Natural killer cell (primary cell): ENCODE measurements at regions of chr4 and their contacts with region 1.

Region 1: GRCh38 chr4:67087897-67088296 is 457.4 kb downstream of the CENPC start:
- DNase-seq: peak in 1 of 2 donors; percentile 47
- ATAC-seq: no peak
- H3K4me3 ChIP-seq: no peak overlapping the region
- H3K4me3 Mint-ChIP-seq: no peak overlapping the region
- H3K27ac ChIP-seq: no peak overlapping the region
- H3K27ac Mint-ChIP-seq: no peak overlapping the region
- H3K4me1 ChIP-seq: no peaks in the 10 kb centered on the region
- H3K4me1 Mint-ChIP-seq: no peaks in the 10 kb centered on the region
- H3K27me3 ChIP-seq: no peaks in the 10 kb centered on the region
- H3K27me3 Mint-ChIP-seq: no peaks in the 10 kb centered on the region
- CTCF ChIP-seq: no peak

Region 2: DNA sequence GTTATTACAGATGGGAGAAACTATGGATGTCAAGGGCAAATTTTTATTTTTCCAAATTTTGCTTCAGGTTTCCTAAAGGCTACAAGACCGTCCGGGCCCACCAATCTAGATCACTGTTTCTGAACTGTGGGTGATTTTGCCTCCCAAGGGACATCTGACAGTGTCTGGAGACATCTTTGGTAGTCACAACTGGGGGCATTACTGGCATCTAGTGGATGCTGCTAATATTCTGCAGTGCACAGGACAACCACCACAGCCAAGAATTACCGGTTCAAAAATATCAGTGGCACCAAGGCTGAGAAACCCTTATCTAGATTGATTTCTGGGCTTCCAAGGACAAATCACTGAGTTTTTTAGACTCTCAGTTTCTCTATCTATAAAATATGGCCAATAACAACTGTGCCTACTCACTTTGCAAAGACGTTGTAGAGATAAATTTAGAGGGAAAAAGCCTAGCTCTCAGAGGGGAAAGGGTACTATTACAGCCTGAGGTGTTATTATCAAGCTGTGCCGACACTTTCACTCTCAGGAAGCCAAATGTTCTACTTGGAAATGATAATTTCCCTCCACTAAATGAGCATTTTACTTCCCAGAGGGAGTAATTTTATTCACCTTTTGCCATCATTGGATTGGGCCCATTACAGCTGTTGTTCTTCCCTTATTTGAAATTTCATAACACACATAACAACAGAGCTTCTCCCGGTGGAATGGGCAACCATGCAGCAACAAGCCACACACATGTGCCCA is 15.3 kb after region 1 on chr4:
- intact Hi-C with region 1: no loop called
- DNase-seq: no peak
- ATAC-seq: no peak
- H3K4me3 ChIP-seq: no peak overlapping the region
- H3K4me3 Mint-ChIP-seq: no peak overlapping the region
- H3K27ac ChIP-seq: no peak overlapping the region
- H3K27ac Mint-ChIP-seq: no peak overlapping the region
- H3K4me1 ChIP-seq: no peaks in the 10 kb centered on the region
- H3K4me1 Mint-ChIP-seq: no peaks in the 10 kb centered on the region
- H3K27me3 ChIP-seq: no peaks in the 10 kb centered on the region
- H3K27me3 Mint-ChIP-seq: no peaks in the 10 kb centered on the region
- CTCF ChIP-seq: no peak

Region 3: GRCh38 chr4:67234296-67234695 is 146.4 kb after region 1 on chr4:
- intact Hi-C with region 1: no loop called
- DNase-seq: no peak
- ATAC-seq: no peak
- H3K4me3 ChIP-seq: no peak overlapping the region
- H3K4me3 Mint-ChIP-seq: no peak overlapping the region
- H3K27ac ChIP-seq: no peak overlapping the region
- H3K27ac Mint-ChIP-seq: no peak overlapping the region
- H3K4me1 ChIP-seq: no peaks in the 10 kb centered on the region
- H3K4me1 Mint-ChIP-seq: no peaks in the 10 kb centered on the region
- H3K27me3 ChIP-seq: no peaks in the 10 kb centered on the region
- H3K27me3 Mint-ChIP-seq: no peaks in the 10 kb centered on the region
- CTCF ChIP-seq: no peak

Region 4: GRCh38 chr4:67327262-67328017 is 239.5 kb after region 1 on chr4:
- intact Hi-C with region 1: loop called (anchors 5 kb)
- DNase-seq: peak in 1 of 2 donors; percentile 68
- ATAC-seq: peak; percentile 64 to 86 (median 78)
- H3K4me3 ChIP-seq: no peak overlapping the region
- H3K4me3 Mint-ChIP-seq: no peak overlapping the region
- H3K27ac ChIP-seq: no peak overlapping the region
- H3K27ac Mint-ChIP-seq: no peak overlapping the region
- H3K4me1 ChIP-seq: no peaks in the 10 kb centered on the region
- H3K4me1 Mint-ChIP-seq: no peaks in the 10 kb centered on the region
- H3K27me3 ChIP-seq: no peaks in the 10 kb centered on the region
- H3K27me3 Mint-ChIP-seq: peaks cover 0 to 6% of the 10 kb centered on the region in 2 donors
- CTCF ChIP-seq: peak; percentile 87